Pancreas (tissue), 10 donors: ENCODE measurements at regions of chr14 and their contacts with region 1.

Region 1: DNA sequence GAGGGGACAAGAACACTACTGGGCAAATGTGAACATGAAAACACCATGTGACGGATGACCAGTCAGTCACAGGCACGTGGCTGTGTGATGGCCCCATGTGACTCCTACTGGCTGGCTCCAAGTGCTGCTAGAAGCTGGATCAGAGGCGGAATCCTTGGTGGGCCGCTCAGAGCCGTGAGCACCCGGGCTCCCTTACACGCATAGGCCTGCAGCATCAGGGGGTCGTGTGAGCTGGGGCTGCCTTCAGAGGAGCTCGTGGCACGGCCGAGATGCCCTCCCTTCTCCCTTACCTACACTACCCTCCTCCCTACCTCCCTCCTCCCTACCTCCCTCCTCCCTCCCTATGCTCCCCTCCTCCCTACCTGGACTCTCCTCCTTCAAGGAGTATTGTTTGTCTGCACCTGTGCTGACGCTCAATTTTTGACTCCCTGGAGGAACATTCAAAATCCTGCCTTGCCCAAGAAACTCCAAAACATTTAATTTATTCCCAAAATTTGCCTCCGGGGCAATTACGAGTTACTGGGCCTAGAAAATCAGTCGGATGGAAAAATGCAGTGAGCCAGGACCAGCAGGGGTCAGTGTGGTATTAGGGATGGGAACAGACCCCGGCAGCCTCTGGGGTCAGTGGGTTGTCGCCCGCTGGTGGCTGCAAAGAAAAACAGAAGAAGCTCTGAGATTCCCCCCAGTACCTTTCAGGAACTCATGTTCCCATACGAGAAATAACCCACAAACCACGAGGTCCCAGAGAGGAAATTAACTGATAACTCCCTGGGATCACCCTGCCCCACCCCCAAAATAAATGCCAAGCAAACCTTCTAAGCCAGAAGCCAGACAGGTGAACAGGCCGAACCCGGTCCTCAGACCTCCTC is 61.2 kb downstream of the C14orf132 start:
- DNase-seq: peak; percentile 69 to 89 (median 82)
- ATAC-seq: peak; percentile 50 to 82 (median 74)
- H3K4me3 ChIP-seq: no peak overlapping the region
- H3K27ac ChIP-seq: no peak overlapping the region
- H3K4me1 ChIP-seq: peaks cover 0 to 5% (median 4%) of the 10 kb centered on the region in 3 donors
- H3K27me3 ChIP-seq: no peaks in the 10 kb centered on the region
- CTCF ChIP-seq: peak; percentile 50 to 73 (median 68)

Region 2: GRCh38 chr14:96001866-96002497 is 98.4 kb before region 1 on chr14:
- intact Hi-C with region 1: loop called in 1 of 3 experiments (anchors 10 kb)
- DNase-seq: peak in 1 of 6 donors; percentile 15
- ATAC-seq: no peak
- H3K4me3 ChIP-seq: no peak overlapping the region
- H3K27ac ChIP-seq: no peak overlapping the region
- H3K4me1 ChIP-seq: no peaks in the 10 kb centered on the region
- H3K27me3 ChIP-seq: peaks cover 0 to 10% (median 0%) of the 10 kb centered on the region in 4 donors
- CTCF ChIP-seq: no peak

Region 3: GRCh38 chr14:96275177-96276112 is 175.1 kb after region 1 on chr14:
- intact Hi-C with region 1: loop called (anchors 5 to 10 kb)
- DNase-seq: peak; percentile 68 to 94 (median 84)
- ATAC-seq: peak; percentile 69 to 88 (median 84)
- H3K4me3 ChIP-seq: no peak overlapping the region
- H3K27ac ChIP-seq: peak overlapping the region; percentile 32 to 53 (median 42)
- H3K4me1 ChIP-seq: peaks cover 0 to 13% (median 13%) of the 10 kb centered on the region in 3 donors
- H3K27me3 ChIP-seq: no peaks in the 10 kb centered on the region
- CTCF ChIP-seq: peak; percentile 90 to 92 (median 92)

Region 4: DNA sequence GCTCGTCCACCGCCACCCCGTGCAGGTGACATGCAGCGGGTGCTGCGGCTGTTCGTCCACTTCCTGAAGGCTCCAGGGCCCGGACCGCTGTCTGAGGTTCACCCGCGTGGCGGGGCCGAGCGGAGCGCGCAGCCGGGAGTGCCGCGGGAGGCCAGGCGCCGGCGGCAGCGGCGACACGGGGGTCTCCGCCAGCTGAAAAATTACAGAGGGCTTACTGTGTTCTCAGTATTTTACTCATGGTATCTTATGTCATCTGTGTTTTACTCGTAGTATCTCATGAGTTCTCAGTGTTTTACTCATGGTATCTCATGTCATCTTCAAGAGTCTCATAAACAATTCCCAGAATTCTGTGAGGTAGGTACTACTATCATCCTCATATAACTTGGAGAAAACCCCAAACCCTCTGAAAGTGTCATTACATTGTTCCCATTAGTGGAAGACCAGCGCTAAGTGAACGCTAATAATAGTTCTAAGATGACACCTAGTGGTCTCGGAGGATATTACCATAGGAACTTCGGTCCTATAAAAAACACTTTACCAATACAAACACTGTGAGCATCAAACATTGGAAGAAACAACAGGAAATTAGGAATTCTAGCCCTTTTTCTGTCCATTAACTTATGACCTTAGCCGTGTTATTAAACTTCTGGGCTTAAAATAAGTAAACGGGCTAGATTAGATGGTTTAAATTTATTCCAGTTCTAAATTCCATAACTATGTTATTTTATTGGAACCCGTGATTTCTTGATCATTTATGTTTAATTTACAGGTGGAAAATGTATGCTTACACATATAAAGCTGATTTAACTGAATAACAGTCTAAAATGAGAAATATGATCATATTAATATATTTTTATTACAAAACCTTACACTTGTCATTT is 324.0 kb after region 1 on chr14:
- intact Hi-C with region 1: loop called in 2 of 3 experiments (anchors 5 to 10 kb)
- DNase-seq: peak in 5 of 6 donors; percentile 21 to 77 (median 37)
- ATAC-seq: peak; percentile 92 to 99 (median 96)
- H3K4me3 ChIP-seq: peak overlapping the region in 3 of 4 donors; percentile 26 to 55 (median 33)
- H3K27ac ChIP-seq: no peak overlapping the region
- H3K4me1 ChIP-seq: peaks cover 0 to 3% (median 0%) of the 10 kb centered on the region in 3 donors
- H3K27me3 ChIP-seq: no peaks in the 10 kb centered on the region
- CTCF ChIP-seq: peak; percentile 59 to 82 (median 67)

Region 5: DNA sequence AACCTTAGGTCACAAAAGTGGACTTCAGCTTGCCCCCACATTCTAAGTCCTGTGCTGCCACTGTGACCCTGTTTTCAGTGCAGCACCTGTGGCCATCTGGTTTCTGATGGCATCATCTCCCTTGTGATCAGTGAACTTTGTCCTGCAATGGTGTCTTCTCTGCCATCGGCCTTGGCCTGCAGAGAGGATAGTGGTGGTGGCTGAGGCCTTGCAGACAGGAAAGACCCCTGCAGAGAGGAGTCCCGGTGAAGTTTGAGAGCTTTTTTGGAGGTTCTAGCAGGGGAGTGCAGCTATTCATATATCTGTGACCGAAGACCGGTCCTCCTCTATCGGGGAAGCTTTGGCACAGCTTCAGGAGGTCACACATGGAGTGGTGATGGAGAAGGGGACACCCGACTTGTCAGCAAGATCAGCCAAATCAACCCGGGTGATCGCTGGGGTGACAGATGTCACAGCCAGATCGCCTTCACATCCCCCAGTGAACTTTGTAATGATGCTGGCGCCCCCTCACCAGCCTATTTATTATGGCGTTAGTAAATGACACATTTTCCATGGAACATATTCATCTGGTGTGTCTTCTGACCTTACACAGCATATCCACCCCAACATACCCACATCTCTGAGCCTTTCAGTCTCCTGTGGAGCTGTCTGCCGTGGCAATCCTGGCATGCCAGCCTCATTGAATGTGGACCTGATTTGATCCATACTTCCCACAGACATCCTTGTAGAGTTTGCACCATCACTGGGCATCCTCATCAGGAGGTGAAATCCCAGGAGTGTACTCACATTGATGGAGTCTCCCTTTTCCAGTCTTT is 537.9 kb after region 1 on chr14:
- intact Hi-C with region 1: no loop called
- DNase-seq: peak in 1 of 6 donors; percentile 0
- ATAC-seq: no peak
- H3K4me3 ChIP-seq: no peak overlapping the region
- H3K27ac ChIP-seq: no peak overlapping the region
- H3K4me1 ChIP-seq: no peaks in the 10 kb centered on the region
- H3K27me3 ChIP-seq: no peaks in the 10 kb centered on the region
- CTCF ChIP-seq: no peak